ENCODE measurements at regions of chr10 and their contacts with region 1.

Region 1: GRCh38 chr10:93680412-93681047 is 21.9 kb downstream of the FRA10AC1 start:
- DNase-seq: no peak
- H3K4me3 ChIP-seq: no peak overlapping the region
- H3K27ac ChIP-seq: no peak overlapping the region
- H3K4me1 ChIP-seq: no peaks in the 10 kb centered on the region
- H3K27me3 ChIP-seq: no peaks in the 10 kb centered on the region
- CTCF ChIP-seq: peak; percentile 24 to 63 (median 33)
- EP300 ChIP-seq: no peak
- POLR2A ChIP-seq: no peak

Region 2: GRCh38 chr10:92657024-92657423 is 1023.5 kb before region 1 on chr10:
- in situ Hi-C with region 1: no loop called
- intact Hi-C with region 1: no loop called
- DNase-seq: no peak
- H3K4me3 ChIP-seq: no peak overlapping the region
- H3K27ac ChIP-seq: no peak overlapping the region
- H3K4me1 ChIP-seq: no peaks in the 10 kb centered on the region
- H3K27me3 ChIP-seq: no peaks in the 10 kb centered on the region
- CTCF ChIP-seq: no peak
- EP300 ChIP-seq: no peak
- POLR2A ChIP-seq: no peak

Region 3: DNA sequence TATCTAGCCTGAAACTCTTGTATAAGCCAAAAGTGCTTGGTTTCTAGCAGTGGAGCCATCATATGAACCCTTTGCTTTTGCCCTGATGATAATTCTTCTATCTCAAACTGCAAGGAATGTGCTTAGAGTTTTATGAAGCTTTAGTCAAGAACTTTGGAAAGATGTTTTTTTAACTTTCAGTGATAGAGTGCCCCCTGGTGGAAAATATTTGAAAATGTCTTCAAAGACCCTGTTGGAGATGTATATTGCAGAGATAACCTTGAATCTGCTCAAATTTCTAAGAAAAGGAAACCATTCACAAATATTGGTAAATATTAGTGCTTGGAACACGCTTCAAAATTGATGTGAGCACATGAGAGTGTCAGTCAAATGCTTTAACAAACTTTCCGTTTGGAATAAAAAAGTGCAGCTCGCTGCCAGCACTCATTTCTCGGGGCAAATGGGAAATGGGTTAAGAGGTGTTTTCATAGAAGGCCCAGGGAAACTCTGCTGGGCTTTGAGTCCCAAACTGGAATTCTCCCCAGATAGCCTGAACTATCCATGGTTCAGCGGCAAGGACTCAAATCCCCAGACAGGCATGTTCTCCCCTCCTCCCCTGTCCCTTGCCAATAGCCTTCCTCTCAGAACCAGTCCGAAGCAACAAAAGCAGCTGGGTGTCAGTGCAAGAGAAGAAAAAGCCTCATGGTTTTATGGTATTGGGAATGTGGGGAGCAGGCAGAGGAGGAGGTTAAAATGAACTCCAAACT is 327.7 kb before region 1 on chr10:
- in situ Hi-C with region 1: loop called in 2 of 4 experiments (anchors 25 kb)
- intact Hi-C with region 1: no loop called
- DNase-seq: no peak
- H3K4me3 ChIP-seq: no peak overlapping the region
- H3K27ac ChIP-seq: no peak overlapping the region
- H3K4me1 ChIP-seq: no peaks in the 10 kb centered on the region
- H3K27me3 ChIP-seq: no peaks in the 10 kb centered on the region
- CTCF ChIP-seq: peak; percentile 61 to 79 (median 68)
- EP300 ChIP-seq: no peak
- POLR2A ChIP-seq: no peak

Measured in transverse colon (tissue), 4 donors.